ENCODE measurements at regions of chr2 and their contacts with region 1.

Region 1: DNA sequence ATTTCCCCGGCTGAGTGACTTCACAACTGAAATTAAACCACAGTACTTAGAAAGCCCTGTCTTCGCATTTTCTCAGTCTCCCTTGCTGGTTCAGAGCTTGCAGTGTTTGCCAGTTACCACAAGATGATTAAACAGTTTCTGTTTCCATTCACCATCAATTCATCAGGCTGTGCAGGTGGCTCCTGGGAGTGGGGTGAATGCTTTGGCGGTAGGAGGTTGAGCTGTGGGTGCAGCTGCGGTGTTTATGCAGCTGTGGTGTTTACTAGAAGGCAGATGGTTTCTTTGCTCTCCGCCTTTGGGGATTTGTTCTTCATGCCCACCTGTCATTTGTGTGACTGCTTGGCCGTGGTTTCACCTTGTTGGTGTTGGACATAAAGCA is 16.1 kb downstream of the ACOXL start:
- DNase-seq: peak; percentile 78
- H3K4me3 Mint-ChIP-seq: peak overlapping the region; percentile 50
- H3K27ac Mint-ChIP-seq: peak overlapping the region; percentile 35
- H3K4me1 Mint-ChIP-seq: peaks cover 47% of the 10 kb centered on the region
- H3K27me3 Mint-ChIP-seq: peaks cover 19% of the 10 kb centered on the region

Region 2: GRCh38 chr2:110677530-110678456 is 70.7 kb before region 1 on chr2 and contains the start of gene BUB1:
- intact Hi-C with region 1: loop called (anchors 1 kb)
- DNase-seq: peak; percentile 96
- H3K4me3 Mint-ChIP-seq: peak within 1 kb of the TSS; percentile 84
- H3K27ac Mint-ChIP-seq: peak within 1 kb of the TSS; percentile 88
- H3K4me1 Mint-ChIP-seq: peaks cover 57% of the 10 kb centered on the region
- H3K27me3 Mint-ChIP-seq: peaks cover 5% of the 10 kb centered on the region
- total RNA-seq, gene BUB1: 56.1 and 61.9 TPM in 2 replicates

Region 3: DNA sequence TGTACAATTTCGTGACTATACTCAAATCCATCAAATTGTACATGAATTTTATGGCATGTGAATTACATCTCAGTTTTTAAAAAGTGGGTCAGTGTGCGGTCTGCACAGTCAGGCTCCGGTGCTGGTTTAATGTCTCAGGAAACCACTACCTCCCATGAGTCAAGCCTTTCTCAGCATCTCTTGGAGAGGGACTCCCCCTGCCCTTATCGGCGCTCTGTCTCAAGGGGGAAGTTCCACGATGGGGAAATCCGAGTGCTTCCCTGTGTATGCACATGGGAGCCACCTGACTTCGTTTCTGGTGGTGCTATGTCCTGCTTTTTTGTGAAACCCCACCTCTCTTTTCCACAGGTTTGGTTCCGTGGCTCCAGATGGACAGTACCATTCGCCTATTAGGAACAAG is 56.4 kb after region 1 on chr2:
- intact Hi-C with region 1: loop called (anchors 1 kb)
- DNase-seq: peak; percentile 66
- H3K4me3 Mint-ChIP-seq: peak overlapping the region; percentile 45
- H3K27ac Mint-ChIP-seq: peak overlapping the region; percentile 46
- H3K4me1 Mint-ChIP-seq: peaks cover 25% of the 10 kb centered on the region
- H3K27me3 Mint-ChIP-seq: peaks cover 42% of the 10 kb centered on the region

Region 4: DNA sequence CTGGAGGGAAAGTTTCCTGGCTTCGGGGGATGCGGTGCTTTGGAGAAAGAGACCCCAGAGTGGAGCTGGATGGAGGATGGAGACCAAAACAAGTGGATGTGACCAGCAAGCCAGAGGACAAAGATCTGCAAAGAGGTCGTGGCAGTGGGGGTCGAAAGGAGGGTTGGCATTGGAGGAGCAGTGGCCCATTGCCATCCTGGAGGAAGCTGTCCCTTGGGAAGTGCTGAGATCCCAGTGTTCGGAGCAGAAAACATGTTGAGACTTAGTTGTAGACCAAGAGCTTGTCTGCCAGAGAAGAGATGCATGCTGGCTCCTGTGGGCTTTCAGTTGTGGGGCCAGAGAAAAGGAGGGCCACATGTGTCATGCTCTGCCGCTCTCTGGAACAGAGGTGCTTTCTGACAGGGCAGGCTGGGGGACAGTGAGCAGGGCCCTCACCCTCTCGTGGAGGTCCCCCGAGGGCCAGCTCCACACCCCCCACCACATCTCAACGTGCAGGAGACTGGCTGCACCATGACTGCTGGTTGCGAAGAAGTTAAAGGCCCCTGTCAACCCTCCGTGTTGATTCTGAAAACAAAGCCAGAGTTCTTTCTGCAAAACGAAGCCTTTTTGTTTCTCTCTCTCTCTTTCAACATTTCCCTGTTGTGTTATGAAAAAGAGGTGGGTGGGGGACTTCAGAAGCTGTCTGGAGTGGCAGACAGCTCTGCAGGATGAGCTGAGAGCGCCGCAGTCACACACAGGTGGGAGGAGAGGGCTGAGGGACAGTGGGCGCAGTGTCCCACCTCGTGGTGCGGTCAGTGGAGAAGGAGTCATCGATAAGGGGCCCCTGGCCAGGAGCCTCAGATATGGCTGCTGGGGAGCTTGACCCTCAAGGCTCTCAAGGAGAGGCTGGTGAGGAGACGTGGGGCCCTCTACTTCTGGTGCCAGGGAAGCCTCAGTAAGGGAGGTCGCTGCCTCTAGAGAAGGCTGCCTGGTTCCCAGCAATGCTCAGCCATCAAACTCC is 294.6 kb after region 1 on chr2:
- intact Hi-C with region 1: loop called (anchors 5 kb)
- DNase-seq: no peak
- H3K4me3 Mint-ChIP-seq: peak overlapping the region; percentile 50
- H3K27ac Mint-ChIP-seq: peak overlapping the region; percentile 85
- H3K4me1 Mint-ChIP-seq: peaks cover 34% of the 10 kb centered on the region
- H3K27me3 Mint-ChIP-seq: peaks cover 21% of the 10 kb centered on the region

Region 5: DNA sequence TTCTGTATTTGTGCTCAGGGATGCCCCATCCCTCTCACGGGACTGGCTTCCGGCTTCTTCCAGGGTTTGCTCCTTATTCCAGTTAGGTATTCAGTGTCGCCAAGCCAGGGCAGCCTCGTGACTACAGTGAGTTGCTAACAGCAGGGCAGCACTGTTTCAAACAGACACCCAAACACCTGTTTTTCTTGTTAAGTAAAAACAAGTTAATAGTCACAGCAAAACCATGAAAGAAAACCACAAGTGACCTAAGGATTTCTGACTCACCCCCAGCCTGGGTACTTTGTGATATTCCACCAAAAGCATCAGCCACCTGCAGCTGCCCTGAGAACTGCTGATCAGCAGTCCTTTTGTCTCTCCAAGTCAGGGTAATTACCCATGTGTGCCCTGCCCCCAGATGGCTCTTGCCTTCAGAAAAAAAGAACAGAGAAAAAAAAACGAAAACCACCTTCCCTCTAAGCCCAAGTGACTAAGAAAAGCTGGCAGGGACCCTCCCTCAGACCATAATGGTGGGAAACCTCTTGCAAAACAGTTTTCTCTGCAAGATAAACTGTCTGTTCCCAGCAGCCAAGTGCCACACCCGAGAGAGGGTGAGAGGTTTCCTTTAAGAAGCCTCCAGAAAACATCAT is 957.3 kb after region 1 on chr2:
- intact Hi-C with region 1: loop called (anchors 10 kb)
- DNase-seq: peak; percentile 65
- H3K4me3 Mint-ChIP-seq: peak overlapping the region; percentile 62
- H3K27ac Mint-ChIP-seq: peak overlapping the region; percentile 86
- H3K4me1 Mint-ChIP-seq: peaks cover 93% of the 10 kb centered on the region
- H3K27me3 Mint-ChIP-seq: peaks cover 2% of the 10 kb centered on the region

Measured in activated T-helper 1 cell treated with anti-CD3 and anti-CD28 coated beads, Interleukin-12 subunit alpha, Interleukin-12 subunit beta, Interleukin-2, Interleukin-4 antibody, amounts not matched to agents 30 ng/mL and 10 ng/mL and 1 ng/mL, durations not matched to agents 14 hours and 24 hours and 36 hours (primary cell).